GM12878 (cell line): ENCODE measurements at regions of chr6 and their contacts with region 1.

Region 1: DNA sequence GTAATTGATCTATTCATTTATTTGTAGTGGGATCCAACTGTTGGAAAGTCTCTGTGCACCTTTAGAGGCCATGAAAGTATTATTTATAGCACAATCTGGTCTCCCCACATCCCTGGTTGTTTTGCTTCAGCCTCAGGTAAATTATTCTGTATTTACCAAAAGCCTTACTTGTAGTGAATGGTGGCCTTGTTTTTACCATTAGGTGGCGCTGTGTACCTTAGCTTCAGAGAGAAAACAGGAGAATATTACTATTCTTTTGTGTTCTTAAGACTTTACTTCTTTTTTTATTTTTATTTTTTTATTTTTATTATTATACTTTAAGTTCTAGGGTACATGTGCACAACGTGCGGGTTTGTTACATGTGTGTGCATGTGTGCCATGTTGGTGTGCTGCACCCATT is 23.7 kb downstream of the PEX7 start:
- DNase-seq: no peak
- ATAC-seq: peak; percentile 68
- H3K4me3 ChIP-seq: no peak overlapping the region
- H3K27ac ChIP-seq: no peak overlapping the region
- H3K4me1 ChIP-seq: no peaks in the 10 kb centered on the region
- H3K27me3 ChIP-seq: no peaks in the 10 kb centered on the region
- CTCF ChIP-seq: peak; percentile 53 to 64 (median 56)
- EP300 ChIP-seq: no peak
- POLR2A ChIP-seq: no peak
- RAD21 ChIP-seq: peak; percentile 78

Region 2: GRCh38 chr6:136365776-136366354 is 480.2 kb before region 1 on chr6:
- CTCF ChIA-PET with region 1: no interaction called
- POLR2A ChIA-PET with region 1: no interaction called
- RAD21 ChIA-PET with region 1: no interaction called
- SMC1A ChIA-PET with region 1: no interaction called
- in situ Hi-C with region 1: no loop called
- intact Hi-C with region 1: no loop called
- DNase-seq: no peak
- ATAC-seq: peak; percentile 22; the same call in 1 of the 3 replicates
- H3K4me3 ChIP-seq: no peak overlapping the region
- H3K27ac ChIP-seq: no peak overlapping the region
- H3K4me1 ChIP-seq: no peaks in the 10 kb centered on the region
- H3K27me3 ChIP-seq: peaks cover 2 to 3% of the 10 kb centered on the region in 2 experiments; a peak in 1 of 4 replicates
- CTCF ChIP-seq: no peak
- EP300 ChIP-seq: no peak
- POLR2A ChIP-seq: no peak
- RAD21 ChIP-seq: no peak

Region 3: GRCh38 chr6:136812174-136812573 is 33.9 kb before region 1 on chr6:
- CTCF ChIA-PET with region 1: no interaction called
- POLR2A ChIA-PET with region 1: no interaction called
- RAD21 ChIA-PET with region 1: no interaction called
- SMC1A ChIA-PET with region 1: no interaction called
- in situ Hi-C with region 1: no loop called
- intact Hi-C with region 1: no loop called
- DNase-seq: no peak
- ATAC-seq: no peak
- H3K4me3 ChIP-seq: no peak overlapping the region
- H3K27ac ChIP-seq: no peak overlapping the region
- H3K4me1 ChIP-seq: no peaks in the 10 kb centered on the region
- H3K27me3 ChIP-seq: no peaks in the 10 kb centered on the region
- CTCF ChIP-seq: no peak
- EP300 ChIP-seq: no peak
- POLR2A ChIP-seq: no peak
- RAD21 ChIP-seq: no peak

Region 4: DNA sequence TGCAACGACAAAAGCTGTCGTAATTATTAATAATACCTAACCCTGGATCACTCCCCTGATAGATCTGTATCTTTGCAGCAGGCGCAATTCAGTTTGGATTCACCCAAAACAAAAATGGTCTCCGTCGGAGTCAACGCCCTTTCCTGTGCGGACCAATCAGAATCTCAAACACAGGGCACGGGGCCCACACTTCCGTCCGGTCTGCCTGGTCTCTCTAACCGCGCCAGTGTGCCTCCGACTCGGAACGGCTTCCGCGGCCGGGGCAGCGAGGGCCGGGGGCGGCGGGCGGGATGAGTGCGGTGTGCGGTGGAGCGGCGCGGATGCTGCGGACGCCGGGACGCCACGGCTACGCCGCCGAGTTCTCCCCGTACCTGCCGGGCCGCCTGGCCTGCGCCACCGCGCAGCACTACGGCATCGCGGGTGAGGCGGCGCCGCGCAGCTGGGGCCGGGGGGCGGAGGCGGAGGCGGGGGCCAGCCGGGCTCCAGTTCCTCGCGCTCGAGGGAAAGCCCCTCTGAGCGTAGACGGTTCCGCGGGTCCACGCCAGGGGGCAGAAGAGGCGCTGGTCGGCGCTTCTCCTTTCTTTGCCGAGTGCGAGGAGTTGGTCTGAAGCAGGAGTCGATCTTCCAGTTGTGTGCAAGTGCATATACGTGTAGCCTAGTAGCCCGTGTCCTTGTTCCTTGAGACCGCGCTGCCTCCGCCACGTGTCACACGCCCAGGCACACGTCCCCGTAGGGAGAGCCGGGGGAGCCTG is 23.5 kb before region 1 on chr6 and contains the start of gene PEX7:
- CTCF ChIA-PET with region 1: interaction called, 11 read pairs
- POLR2A ChIA-PET with region 1: interaction called, 3 read pairs
- RAD21 ChIA-PET with region 1: no interaction called
- SMC1A ChIA-PET with region 1: interaction called, 3 read pairs
- in situ Hi-C with region 1: no loop called
- intact Hi-C with region 1: no loop called
- DNase-seq: peak; percentile 67
- ATAC-seq: peak; percentile 98
- H3K4me3 ChIP-seq: peak within 1 kb of the TSS; percentile 83
- H3K27ac ChIP-seq: peak within 1 kb of the TSS; percentile 76
- H3K4me1 ChIP-seq: no peaks in the 10 kb centered on the region
- H3K27me3 ChIP-seq: no peaks in the 10 kb centered on the region
- CTCF ChIP-seq: peak; percentile 68 to 84 (median 72)
- EP300 ChIP-seq: peak in 1 of 2 experiments; percentile 2; a peak in 1 of 4 replicates
- POLR2A ChIP-seq: peak; percentile 90
- RAD21 ChIP-seq: peak; percentile 32; the same call in 1 of the 2 replicates
- polyA plus RNA-seq, gene PEX7: 0.58 to 2.7 TPM

Region 5: GRCh38 chr6:136859430-136859829 is 13.4 kb after region 1 on chr6:
- CTCF ChIA-PET with region 1: interaction called, 11 read pairs
- POLR2A ChIA-PET with region 1: no interaction called
- RAD21 ChIA-PET with region 1: no interaction called
- SMC1A ChIA-PET with region 1: interaction called, 4 read pairs
- in situ Hi-C with region 1: no loop called
- intact Hi-C with region 1: no loop called
- DNase-seq: no peak
- ATAC-seq: no peak
- H3K4me3 ChIP-seq: no peak overlapping the region
- H3K27ac ChIP-seq: no peak overlapping the region
- H3K4me1 ChIP-seq: no peaks in the 10 kb centered on the region
- H3K27me3 ChIP-seq: no peaks in the 10 kb centered on the region
- CTCF ChIP-seq: no peak
- EP300 ChIP-seq: no peak
- POLR2A ChIP-seq: no peak
- RAD21 ChIP-seq: no peak

Region 6: DNA sequence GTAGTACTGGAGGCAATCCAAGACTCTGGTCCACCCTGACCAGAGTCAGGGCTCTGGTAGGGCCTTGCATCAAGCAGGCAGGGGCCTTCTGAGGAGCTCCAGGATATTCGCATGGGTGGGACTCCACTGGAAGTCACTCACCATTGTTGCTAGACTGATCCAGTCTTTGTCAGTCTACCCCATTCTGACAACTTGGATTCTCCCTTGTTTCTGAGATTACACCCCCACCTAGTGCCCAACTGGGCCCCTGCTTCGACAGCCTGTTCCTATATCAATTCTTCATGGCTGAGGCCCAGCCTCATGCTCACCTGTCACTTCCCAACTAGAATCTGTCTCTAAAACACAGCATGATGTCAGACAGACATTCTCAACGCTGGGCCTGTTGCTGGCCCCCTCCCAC is 81.2 kb after region 1 on chr6:
- CTCF ChIA-PET with region 1: interaction called, 11 read pairs
- POLR2A ChIA-PET with region 1: no interaction called
- RAD21 ChIA-PET with region 1: interaction called, 4 read pairs
- SMC1A ChIA-PET with region 1: interaction called, 3 read pairs
- in situ Hi-C with region 1: no loop called
- intact Hi-C with region 1: loop called (anchors 5 kb)
- DNase-seq: no peak
- ATAC-seq: peak; percentile 87
- H3K4me3 ChIP-seq: no peak overlapping the region
- H3K27ac ChIP-seq: no peak overlapping the region
- H3K4me1 ChIP-seq: no peaks in the 10 kb centered on the region
- H3K27me3 ChIP-seq: peaks cover 13% of the 10 kb centered on the region in 2 experiments
- CTCF ChIP-seq: peak; percentile 50 to 74 (median 55)
- EP300 ChIP-seq: no peak
- POLR2A ChIP-seq: no peak
- RAD21 ChIP-seq: peak; percentile 66

Region 7: DNA sequence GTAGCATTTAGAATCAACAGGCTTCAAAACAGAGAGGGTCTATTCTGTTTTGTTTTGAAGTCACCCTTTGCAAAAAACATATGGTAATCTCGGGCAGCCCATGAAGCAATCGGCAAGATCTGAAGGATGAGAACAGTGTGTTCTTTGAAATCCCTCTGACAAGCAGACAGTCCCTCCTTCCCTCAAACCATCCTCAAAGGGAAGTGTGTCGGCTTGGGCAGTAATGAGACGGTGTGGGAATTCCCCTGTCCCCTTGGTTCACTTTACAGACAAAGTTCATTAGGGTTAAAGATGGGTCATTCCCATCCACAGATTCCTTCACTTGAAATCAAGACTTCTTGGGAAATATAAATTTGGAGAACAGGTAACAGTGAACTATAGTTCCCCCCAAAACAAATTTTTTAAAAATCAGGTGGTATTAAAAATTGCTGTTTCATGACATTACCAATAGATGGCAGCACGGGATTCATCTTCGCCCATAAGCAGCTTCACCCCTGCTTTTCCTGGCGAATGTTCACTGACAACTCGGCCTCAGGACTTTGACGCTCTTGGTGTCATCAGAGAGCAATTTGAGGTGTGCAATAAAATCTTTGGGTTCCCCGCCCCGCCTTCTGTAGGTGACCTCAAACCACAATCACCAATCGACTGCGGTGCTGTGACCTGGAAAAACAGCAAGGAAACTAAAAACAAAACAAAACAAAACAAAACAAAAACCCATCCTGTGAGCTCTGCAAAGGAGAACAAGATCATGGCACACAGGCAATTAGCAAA is 861.7 kb after region 1 on chr6:
- CTCF ChIA-PET with region 1: no interaction called
- POLR2A ChIA-PET with region 1: no interaction called
- RAD21 ChIA-PET with region 1: no interaction called
- SMC1A ChIA-PET with region 1: no interaction called
- in situ Hi-C with region 1: no loop called
- intact Hi-C with region 1: no loop called
- DNase-seq: peak; percentile 97
- ATAC-seq: peak; percentile 75
- H3K4me3 ChIP-seq: peak overlapping the region; percentile 49; the same call in 1 of the 2 replicates
- H3K27ac ChIP-seq: peak overlapping the region; percentile 64
- H3K4me1 ChIP-seq: peaks cover 39% of the 10 kb centered on the region
- H3K27me3 ChIP-seq: no peaks in the 10 kb centered on the region
- CTCF ChIP-seq: peak; percentile 67 to 88 (median 83); a peak in 5 of 6 replicates
- EP300 ChIP-seq: peak; percentile 33 to 57; a peak in 2 of 4 replicates
- POLR2A ChIP-seq: no peak
- RAD21 ChIP-seq: peak; percentile 91